GM12878 (cell line): ENCODE measurements at regions of chr3 and their contacts with region 1.

Region 1: DNA sequence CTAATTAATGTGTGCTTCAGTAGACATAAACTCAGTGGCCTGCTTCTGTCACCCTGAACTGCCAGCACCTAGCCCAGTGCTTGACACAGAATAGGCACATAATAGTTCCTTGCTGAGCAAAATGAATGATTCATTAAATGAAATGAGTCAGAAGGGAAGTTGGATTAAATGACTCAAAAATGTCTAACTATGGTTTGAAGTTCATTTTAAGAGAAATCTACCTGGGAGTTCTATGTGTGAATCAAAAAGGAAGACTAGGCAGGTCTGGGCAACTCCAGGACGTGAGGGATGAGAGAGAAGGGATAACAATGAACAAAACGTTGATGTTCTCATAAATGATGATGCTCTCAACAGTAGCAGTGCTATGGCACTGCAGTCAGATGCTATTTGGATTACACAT is 175.0 kb downstream of the CFAP20DC start:
- DNase-seq: peak; percentile 59
- ATAC-seq: peak; percentile 94
- H3K4me3 ChIP-seq: no peak overlapping the region
- H3K27ac ChIP-seq: peak overlapping the region; percentile 67
- H3K4me1 ChIP-seq: peaks cover 5% of the 10 kb centered on the region; the same call in 1 of the 2 replicates
- H3K27me3 ChIP-seq: no peaks in the 10 kb centered on the region
- CTCF ChIP-seq: no peak
- EP300 ChIP-seq: peak in 1 of 2 experiments; percentile 77; a peak in 1 of 4 replicates
- POLR2A ChIP-seq: no peak
- RAD21 ChIP-seq: no peak

Region 2: DNA sequence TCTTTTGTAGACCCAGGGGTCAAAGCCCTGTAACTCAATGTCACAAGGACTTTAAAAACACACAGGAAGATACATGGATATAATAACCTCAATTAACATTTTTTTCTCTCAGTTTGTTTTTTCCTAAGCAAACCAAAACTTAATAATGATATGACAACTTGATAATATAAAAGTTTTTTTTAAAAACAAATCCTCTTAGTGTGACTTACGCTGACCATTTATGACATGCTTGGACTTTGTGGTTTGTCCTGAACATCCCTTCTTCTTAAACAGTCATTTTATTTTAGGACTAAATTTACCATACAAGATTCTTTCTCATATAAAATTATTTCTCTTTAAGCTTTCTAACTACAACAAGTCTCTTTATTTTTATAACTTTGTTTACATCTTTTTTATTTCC is 182.8 kb before region 1 on chr3:
- CTCF ChIA-PET with region 1: no interaction called
- POLR2A ChIA-PET with region 1: no interaction called
- RAD21 ChIA-PET with region 1: no interaction called
- SMC1A ChIA-PET with region 1: no interaction called
- in situ Hi-C with region 1: no loop called
- intact Hi-C with region 1: loop called (anchors 10 kb)
- DNase-seq: no peak
- ATAC-seq: no peak
- H3K4me3 ChIP-seq: no peak overlapping the region
- H3K27ac ChIP-seq: no peak overlapping the region
- H3K4me1 ChIP-seq: no peaks in the 10 kb centered on the region
- H3K27me3 ChIP-seq: no peaks in the 10 kb centered on the region
- CTCF ChIP-seq: no peak
- EP300 ChIP-seq: no peak
- POLR2A ChIP-seq: no peak
- RAD21 ChIP-seq: no peak

Region 3: GRCh38 chr3:58861551-58861950 is 13.2 kb before region 1 on chr3:
- CTCF ChIA-PET with region 1: interaction called, 7 read pairs
- POLR2A ChIA-PET with region 1: interaction called, 4 read pairs
- RAD21 ChIA-PET with region 1: interaction called, 6 read pairs
- SMC1A ChIA-PET with region 1: interaction called, 19 read pairs
- in situ Hi-C with region 1: no loop called
- intact Hi-C with region 1: no loop called
- DNase-seq: no peak
- ATAC-seq: peak; percentile 54; the same call in 2 of the 3 replicates
- H3K4me3 ChIP-seq: no peak overlapping the region
- H3K27ac ChIP-seq: no peak overlapping the region
- H3K4me1 ChIP-seq: no peaks in the 10 kb centered on the region
- H3K27me3 ChIP-seq: no peaks in the 10 kb centered on the region
- CTCF ChIP-seq: no peak
- EP300 ChIP-seq: no peak
- POLR2A ChIP-seq: no peak
- RAD21 ChIP-seq: no peak

Region 4: GRCh38 chr3:58888087-58888486 is 13.3 kb after region 1 on chr3:
- CTCF ChIA-PET with region 1: no interaction called
- POLR2A ChIA-PET with region 1: interaction called, 3 read pairs
- RAD21 ChIA-PET with region 1: interaction called, 3 read pairs
- SMC1A ChIA-PET with region 1: interaction called, 10 read pairs
- in situ Hi-C with region 1: no loop called
- intact Hi-C with region 1: no loop called
- DNase-seq: no peak
- ATAC-seq: no peak
- H3K4me3 ChIP-seq: no peak overlapping the region
- H3K27ac ChIP-seq: no peak overlapping the region
- H3K4me1 ChIP-seq: no peaks in the 10 kb centered on the region
- H3K27me3 ChIP-seq: no peaks in the 10 kb centered on the region
- CTCF ChIP-seq: no peak
- EP300 ChIP-seq: no peak
- POLR2A ChIP-seq: no peak
- RAD21 ChIP-seq: no peak

Region 5: DNA sequence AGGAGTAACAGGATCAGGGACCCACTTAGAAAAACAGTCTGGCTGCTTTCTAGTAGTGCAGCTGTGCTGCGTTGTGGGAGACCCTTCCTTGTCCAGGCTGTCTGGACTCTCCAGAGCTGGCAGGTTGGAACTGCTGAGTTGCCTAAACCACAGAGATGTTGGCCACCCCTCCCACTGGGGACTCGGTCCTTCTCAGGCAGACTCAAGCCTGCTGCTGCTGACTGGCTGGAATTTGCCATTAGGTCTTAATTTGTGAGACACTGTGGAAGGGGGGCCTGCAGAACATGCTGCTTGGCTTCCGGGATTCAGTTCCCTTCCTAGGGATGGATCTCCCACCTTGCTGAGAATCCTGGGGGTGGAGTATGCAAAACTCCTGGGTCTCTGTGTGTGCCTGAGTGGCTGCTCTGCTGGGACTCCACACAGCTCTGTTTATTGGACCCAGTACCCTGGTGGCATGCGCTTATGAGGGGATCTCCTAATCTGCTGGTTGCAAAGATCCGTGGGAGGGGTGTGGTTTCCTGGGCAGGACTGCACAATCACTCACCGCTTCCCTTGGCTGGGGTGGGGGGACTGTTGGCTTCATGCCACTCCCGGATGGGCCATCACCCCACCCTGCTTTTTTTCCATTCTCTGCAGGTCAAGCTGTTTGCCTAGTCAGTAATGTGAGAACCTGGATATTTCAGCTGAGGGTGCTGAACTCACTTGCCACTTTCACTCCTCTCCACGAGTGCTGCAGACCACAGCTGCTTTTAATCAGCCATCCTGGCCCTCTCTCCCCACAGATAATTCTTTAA is 24.6 kb after region 1 on chr3:
- CTCF ChIA-PET with region 1: interaction called, 3 read pairs
- POLR2A ChIA-PET with region 1: interaction called, 5 read pairs
- RAD21 ChIA-PET with region 1: interaction called, 7 read pairs
- SMC1A ChIA-PET with region 1: interaction called, 24 read pairs
- in situ Hi-C with region 1: no loop called
- intact Hi-C with region 1: no loop called
- DNase-seq: peak; percentile 63
- ATAC-seq: peak; percentile 95
- H3K4me3 ChIP-seq: no peak overlapping the region
- H3K27ac ChIP-seq: no peak overlapping the region
- H3K4me1 ChIP-seq: peaks cover 8% of the 10 kb centered on the region; the same call in 1 of the 2 replicates
- H3K27me3 ChIP-seq: no peaks in the 10 kb centered on the region
- CTCF ChIP-seq: no peak
- EP300 ChIP-seq: peak; percentile 23 to 52; a peak in 2 of 4 replicates
- POLR2A ChIP-seq: no peak
- RAD21 ChIP-seq: no peak

Region 6: GRCh38 chr3:58952128-58952917 is 77.5 kb after region 1 on chr3:
- CTCF ChIA-PET with region 1: no interaction called
- POLR2A ChIA-PET with region 1: no interaction called
- RAD21 ChIA-PET with region 1: interaction called, 12 read pairs
- SMC1A ChIA-PET with region 1: interaction called, 4 read pairs
- in situ Hi-C with region 1: no loop called
- intact Hi-C with region 1: loop called (anchors 5 kb)
- DNase-seq: peak; percentile 17
- ATAC-seq: peak; percentile 92
- H3K4me3 ChIP-seq: no peak overlapping the region
- H3K27ac ChIP-seq: no peak overlapping the region
- H3K4me1 ChIP-seq: no peaks in the 10 kb centered on the region
- H3K27me3 ChIP-seq: no peaks in the 10 kb centered on the region
- CTCF ChIP-seq: no peak
- EP300 ChIP-seq: no peak
- POLR2A ChIP-seq: no peak
- RAD21 ChIP-seq: no peak